Prostate gland (tissue), 2 donors: ENCODE measurements at regions of chr18 and their contacts with region 1.

Region 1: DNA sequence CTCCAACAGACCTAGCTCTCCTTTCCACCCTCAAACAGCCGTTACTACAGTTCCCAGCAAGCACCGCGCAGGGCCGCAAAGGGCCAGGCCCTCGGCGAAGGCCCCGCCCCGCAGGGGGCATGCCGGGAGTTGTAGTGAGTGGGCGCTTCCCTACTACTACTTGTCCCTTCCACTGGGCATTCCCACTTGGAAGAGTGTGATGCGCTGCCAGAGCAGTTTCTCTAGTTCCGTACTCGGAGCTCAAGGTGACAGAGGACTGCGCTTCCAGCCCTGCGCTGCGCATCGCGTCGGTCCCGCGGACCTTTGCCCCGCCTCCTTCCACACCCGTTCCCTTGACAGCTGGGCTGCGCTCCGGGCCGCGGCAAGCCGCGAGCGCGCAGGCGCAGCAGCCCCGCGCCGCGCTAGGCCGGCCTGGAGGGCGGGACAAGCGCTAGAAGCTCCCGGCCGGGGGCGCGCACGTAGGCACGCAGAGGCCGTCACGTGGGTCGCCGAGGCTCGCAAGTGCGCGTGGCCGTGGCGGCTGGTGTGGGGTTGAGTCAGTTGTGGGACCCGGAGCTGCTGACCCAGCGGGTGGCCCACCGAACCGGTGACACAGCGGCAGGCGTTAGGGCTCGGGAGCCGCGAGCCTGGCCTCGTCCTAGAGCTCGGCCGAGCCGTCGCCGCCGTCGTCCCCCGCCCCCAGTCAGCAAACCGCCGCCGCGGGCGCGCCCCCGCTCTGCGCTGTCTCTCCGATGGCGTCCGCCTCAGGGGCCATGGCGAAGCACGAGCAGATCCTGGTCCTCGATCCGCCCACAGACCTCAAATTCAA is at the start of gene VAPA:
- DNase-seq: peak; percentile 94
- H3K4me3 ChIP-seq: peak within 1 kb of the TSS; percentile 88 to 96
- H3K27ac ChIP-seq: peak within 1 kb of the TSS; percentile 99 to 100
- H3K4me1 ChIP-seq: peaks cover 5% of the 10 kb centered on the region
- H3K27me3 ChIP-seq: no peaks in the 10 kb centered on the region
- CTCF ChIP-seq: peak in 1 of 4 experiments; percentile 26
- POLR2A ChIP-seq: peak; percentile 96
- total RNA-seq, gene VAPA: 140 to 183 TPM

Region 2: DNA sequence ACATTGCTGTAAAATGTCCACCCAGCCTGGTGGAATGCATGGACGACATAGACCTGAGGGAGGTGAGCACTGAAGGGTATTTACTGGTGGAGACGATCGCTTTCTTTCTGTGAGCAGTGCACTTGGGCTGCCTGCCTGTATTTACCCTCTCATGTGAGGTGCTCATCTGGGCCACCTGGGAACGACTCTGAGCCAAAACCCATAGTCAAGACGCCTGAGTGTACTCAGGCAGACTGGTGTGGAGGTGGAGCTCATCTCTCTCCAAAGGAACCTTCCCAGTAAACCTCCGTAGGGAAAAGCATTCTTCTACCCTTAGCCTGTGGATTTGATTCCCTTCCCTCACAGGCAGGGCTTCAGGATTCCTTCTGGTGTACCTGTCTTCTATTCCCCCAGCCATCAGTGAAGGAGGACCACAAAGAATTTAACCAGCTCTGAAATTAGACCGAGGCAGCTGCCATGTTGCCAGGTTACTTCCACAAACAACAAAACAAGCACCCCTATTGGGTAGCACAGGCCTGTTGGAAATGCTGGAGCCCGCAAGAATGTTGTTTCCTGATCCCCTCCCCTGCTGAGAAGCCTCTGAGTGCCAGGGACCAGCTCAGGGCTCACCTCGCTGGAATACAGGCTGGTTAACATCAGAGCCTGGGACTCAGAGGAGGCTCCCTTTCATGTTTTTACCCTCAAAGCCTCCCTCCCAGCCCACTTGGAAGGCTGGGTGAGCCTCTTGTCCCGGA is 75.4 kb before region 1 on chr18:
- intact Hi-C with region 1: loop called (anchors 5 kb)
- DNase-seq: no peak
- H3K4me3 ChIP-seq: no peak overlapping the region
- H3K27ac ChIP-seq: no peak overlapping the region
- H3K4me1 ChIP-seq: no peaks in the 10 kb centered on the region
- H3K27me3 ChIP-seq: no peaks in the 10 kb centered on the region
- CTCF ChIP-seq: no peak
- POLR2A ChIP-seq: no peak

Region 3: DNA sequence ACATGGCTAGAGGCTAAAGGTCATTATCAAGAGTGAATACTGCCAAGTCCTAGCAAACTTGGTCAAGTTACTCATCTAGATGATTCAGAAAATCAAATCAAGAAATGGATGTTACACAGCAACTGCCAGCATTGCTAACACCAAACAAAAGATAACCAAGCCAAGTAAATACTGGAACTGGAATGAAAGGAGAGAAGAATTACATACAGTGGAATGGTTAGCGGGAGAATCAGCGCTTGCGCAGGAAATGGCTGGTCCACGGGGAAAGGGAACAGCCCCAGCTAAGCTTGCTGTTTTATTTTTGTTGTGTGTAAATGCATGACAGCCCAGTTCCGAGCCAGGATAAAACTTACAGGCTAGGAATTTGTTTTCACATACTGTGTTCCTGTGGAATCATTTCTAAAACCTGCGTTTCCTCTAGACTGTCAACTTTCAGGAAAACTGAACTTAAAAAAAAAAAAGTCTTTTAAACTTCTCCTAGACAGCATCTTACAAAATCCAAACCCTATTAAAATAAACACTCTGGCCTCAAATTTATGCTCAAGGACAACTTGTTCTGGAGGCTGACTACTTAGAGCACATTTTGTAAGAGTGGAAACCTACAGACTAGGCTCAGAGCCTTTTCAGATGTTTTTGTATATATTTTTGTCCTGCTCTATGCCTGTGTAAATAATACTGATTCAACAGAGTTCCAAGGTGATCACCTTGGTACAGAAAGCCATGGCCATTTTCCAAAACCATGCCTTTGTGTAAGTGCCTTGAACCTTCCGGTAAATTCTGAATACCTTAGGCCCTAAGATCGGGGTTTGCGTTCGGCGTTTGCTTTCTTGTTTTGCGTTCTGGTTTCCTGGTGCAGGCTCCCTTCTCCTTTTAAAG is 58.7 kb before region 1 on chr18:
- intact Hi-C with region 1: loop called (anchors 2 kb)
- DNase-seq: no peak
- H3K4me3 ChIP-seq: no peak overlapping the region
- H3K27ac ChIP-seq: peak overlapping the region; percentile 63 to 69
- H3K4me1 ChIP-seq: no peaks in the 10 kb centered on the region
- H3K27me3 ChIP-seq: no peaks in the 10 kb centered on the region
- CTCF ChIP-seq: no peak
- POLR2A ChIP-seq: no peak